HepG2 (cell line): ENCODE measurements at regions of chr14 and their contacts with region 1.

Region 1: DNA sequence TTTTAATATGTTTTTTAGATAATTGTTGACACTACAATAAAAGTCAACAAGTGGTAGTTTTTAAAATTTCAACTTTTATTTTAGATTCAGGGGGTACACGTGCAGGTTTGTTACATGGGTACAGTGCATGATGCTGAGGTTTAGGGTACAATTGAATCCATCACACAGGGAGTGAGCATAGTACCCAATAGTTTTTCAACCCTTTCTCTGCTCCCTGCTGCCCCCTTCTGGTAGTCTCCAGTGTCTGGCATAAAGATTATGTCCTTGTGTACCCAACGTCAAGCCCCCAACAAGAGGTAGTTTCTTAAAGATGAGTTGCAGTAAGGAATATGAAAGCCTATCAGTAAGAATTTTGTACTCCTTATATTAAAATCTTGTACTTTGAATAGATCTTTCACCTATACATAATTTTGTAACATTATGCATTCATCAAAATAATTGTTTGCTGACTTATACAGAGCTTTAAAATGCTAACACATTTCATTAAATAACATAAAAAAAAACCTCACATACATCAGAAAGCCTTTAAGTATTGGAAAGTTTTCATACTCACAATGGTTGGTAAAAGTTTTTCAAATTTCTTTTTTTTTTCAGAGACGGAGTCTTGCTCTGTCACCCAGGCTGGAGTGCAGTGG is 5.4 kb upstream of the RALGAPA1 start:
- DNase-seq: peak; percentile 88
- ATAC-seq: peak; percentile 86
- H3K4me3 ChIP-seq: no peak overlapping the region
- H3K27ac ChIP-seq: no peak overlapping the region
- H3K4me1 ChIP-seq: peaks cover 19% of the 10 kb centered on the region
- H3K27me3 ChIP-seq: no peaks in the 10 kb centered on the region
- CTCF ChIP-seq: peak; percentile 94
- EP300 ChIP-seq: no peak
- POLR2A ChIP-seq: no peak
- RAD21 ChIP-seq: peak; percentile 64

Region 2: DNA sequence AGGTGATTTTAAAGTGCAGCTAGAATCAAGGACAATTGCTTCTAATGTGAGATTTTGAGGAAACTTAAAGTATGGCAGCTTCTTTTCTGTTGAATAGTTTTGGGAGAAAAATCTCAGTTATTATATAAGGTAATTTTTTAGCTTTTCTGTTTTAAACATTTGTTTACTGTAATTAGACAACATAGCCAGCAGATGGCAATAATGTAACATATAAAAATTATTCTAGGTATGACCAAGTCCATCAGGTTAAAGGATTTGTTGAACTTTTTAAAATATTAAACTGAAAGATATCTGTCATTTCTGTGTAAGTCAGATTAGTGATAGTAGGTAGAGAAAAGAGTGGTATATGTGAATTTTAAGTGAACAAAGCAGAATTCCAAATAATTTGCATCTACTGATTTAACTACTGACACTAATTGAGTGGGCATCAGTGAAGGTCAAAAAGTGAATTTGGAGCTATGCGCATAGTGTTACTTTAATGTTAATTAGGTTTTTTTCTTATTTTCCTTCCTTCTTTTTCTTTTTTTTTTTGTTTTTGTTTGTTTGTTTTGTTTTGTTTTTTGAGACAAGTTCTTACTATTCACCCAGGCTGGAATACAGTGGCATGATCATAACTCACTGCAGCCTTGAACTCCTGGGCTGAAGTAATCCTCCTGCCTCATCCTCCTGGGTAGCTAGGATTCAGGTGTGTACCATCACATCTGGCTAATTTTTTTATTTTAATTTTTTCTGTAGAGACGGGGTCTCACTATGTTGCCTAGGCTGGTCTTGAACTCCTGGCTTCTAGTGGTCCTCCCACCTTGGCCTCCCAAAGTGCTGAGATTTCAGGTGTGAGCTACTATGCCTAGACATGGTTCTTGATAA is 673.5 kb before region 1 on chr14:
- CTCF ChIA-PET with region 1: no interaction called
- POLR2A ChIA-PET with region 1: no interaction called
- in situ Hi-C with region 1: loop called (anchors 25 kb)
- intact Hi-C with region 1: loop called (anchors 10 kb)
- DNase-seq: peak; percentile 68
- ATAC-seq: no peak
- H3K4me3 ChIP-seq: no peak overlapping the region
- H3K27ac ChIP-seq: no peak overlapping the region
- H3K4me1 ChIP-seq: peaks cover 17% of the 10 kb centered on the region
- H3K27me3 ChIP-seq: no peaks in the 10 kb centered on the region
- CTCF ChIP-seq: peak; percentile 64
- EP300 ChIP-seq: no peak
- POLR2A ChIP-seq: no peak
- RAD21 ChIP-seq: peak; percentile 69

Region 3: DNA sequence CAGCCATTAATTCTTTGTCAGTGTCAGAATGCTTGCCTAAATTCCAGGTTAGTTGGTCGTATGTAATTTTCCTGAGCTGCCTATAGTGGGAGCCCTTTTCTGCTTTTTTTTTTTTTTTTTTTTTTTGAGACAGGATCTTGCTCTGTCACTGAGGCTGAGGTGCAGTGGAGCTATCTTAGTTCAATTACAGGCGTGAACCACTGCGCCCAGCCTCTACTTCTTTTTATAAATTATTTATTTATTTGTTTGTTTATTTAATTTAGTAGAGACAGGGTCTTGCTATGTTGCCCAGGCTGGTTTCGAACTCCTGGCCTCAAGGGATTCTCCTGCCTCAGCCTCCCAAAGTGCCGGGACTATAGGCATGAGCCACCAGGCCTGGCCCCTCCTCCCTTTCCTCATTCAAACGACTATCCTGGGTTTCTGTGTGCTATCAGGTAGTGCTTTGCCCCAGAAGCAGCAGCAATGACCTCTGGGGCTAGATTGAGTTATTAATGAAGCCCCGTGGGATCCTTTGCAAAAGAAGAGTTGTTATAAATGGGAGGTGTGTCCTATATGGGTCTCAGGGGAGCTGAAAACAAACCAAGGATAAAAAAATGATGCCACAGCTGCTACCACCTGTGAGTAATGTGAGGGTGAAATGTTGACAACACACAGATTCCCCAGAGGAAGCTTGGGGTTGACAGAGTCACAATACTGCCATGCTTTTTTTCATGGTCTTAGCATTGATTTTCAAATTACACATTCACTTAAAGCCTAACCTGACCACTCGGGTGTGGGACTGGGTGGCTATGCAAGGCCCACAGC is 375.4 kb before region 1 on chr14:
- CTCF ChIA-PET with region 1: interaction called, 6 read pairs
- POLR2A ChIA-PET with region 1: no interaction called
- in situ Hi-C with region 1: loop called (anchors 5 kb)
- intact Hi-C with region 1: loop called (anchors 1 kb)
- DNase-seq: peak; percentile 52
- ATAC-seq: peak; percentile 75
- H3K4me3 ChIP-seq: no peak overlapping the region
- H3K27ac ChIP-seq: no peak overlapping the region
- H3K4me1 ChIP-seq: no peaks in the 10 kb centered on the region
- H3K27me3 ChIP-seq: no peaks in the 10 kb centered on the region
- CTCF ChIP-seq: peak; percentile 70
- EP300 ChIP-seq: no peak
- POLR2A ChIP-seq: no peak
- RAD21 ChIP-seq: no peak; the same call in 1 of the 2 replicates

Region 4: GRCh38 chr14:35687335-35687939 is 127.1 kb before region 1 on chr14:
- CTCF ChIA-PET with region 1: interaction called, 13 read pairs
- POLR2A ChIA-PET with region 1: no interaction called
- in situ Hi-C with region 1: loop called (anchors 10 kb)
- intact Hi-C with region 1: loop called (anchors 2 kb)
- DNase-seq: peak; percentile 75
- ATAC-seq: peak; percentile 91
- H3K4me3 ChIP-seq: no peak overlapping the region
- H3K27ac ChIP-seq: no peak overlapping the region
- H3K4me1 ChIP-seq: no peaks in the 10 kb centered on the region
- H3K27me3 ChIP-seq: no peaks in the 10 kb centered on the region
- CTCF ChIP-seq: peak; percentile 94
- EP300 ChIP-seq: no peak
- POLR2A ChIP-seq: no peak
- RAD21 ChIP-seq: peak; percentile 89

Region 5: GRCh38 chr14:35747379-35747778 is 67.1 kb before region 1 on chr14:
- CTCF ChIA-PET with region 1: no interaction called
- POLR2A ChIA-PET with region 1: no interaction called
- in situ Hi-C with region 1: no loop called
- intact Hi-C with region 1: loop called (anchors 2 kb)
- DNase-seq: peak; percentile 23
- ATAC-seq: peak; percentile 68
- H3K4me3 ChIP-seq: no peak overlapping the region
- H3K27ac ChIP-seq: no peak overlapping the region
- H3K4me1 ChIP-seq: no peaks in the 10 kb centered on the region
- H3K27me3 ChIP-seq: no peaks in the 10 kb centered on the region
- CTCF ChIP-seq: no peak
- EP300 ChIP-seq: no peak
- POLR2A ChIP-seq: no peak
- RAD21 ChIP-seq: no peak

Region 6: GRCh38 chr14:35826218-35826951 is 11.9 kb after region 1 on chr14 and contains the start of gene BRMS1L:
- CTCF ChIA-PET with region 1: no interaction called
- POLR2A ChIA-PET with region 1: interaction called, 81 read pairs
- in situ Hi-C with region 1: no loop called
- intact Hi-C with region 1: loop called (anchors 1 kb)
- DNase-seq: peak; percentile 100
- ATAC-seq: peak; percentile 96
- H3K4me3 ChIP-seq: peak within 1 kb of the TSS; percentile 78 to 99 (median 95)
- H3K27ac ChIP-seq: peak within 1 kb of the TSS; percentile 95
- H3K4me1 ChIP-seq: peaks cover 45% of the 10 kb centered on the region
- H3K27me3 ChIP-seq: no peaks in the 10 kb centered on the region; a peak in 1 of 5 replicates
- CTCF ChIP-seq: peak; percentile 51
- EP300 ChIP-seq: peak in 1 of 2 experiments; percentile 50; a peak in 2 of 4 replicates
- POLR2A ChIP-seq: peak in 1 of 2 experiments; percentile 100; a peak in 2 of 4 replicates
- RAD21 ChIP-seq: peak; percentile 72; the same call in 1 of the 2 replicates
- total RNA-seq, gene BRMS1L: 23.8 and 35.5 TPM in 2 replicates